ENCODE measurements at regions of chr2 and their contacts with region 1.

Region 1: GRCh38 chr2:68925295-68925896 is 27.3 kb downstream of the GKN2 start:
- DNase-seq: peak; percentile 61 to 77 (median 71)
- H3K4me3 ChIP-seq: no peak overlapping the region
- H3K27ac ChIP-seq: no peak overlapping the region
- H3K4me1 ChIP-seq: peaks cover 0 to 4% (median 2%) of the 10 kb centered on the region in 4 experiments
- H3K27me3 ChIP-seq: no peaks in the 10 kb centered on the region

Region 2: GRCh38 chr2:68487773-68488355 is 437.5 kb before region 1 on chr2:
- CTCF ChIA-PET with region 1: interaction called, 26 read pairs
- POLR2A ChIA-PET with region 1: no interaction called
- DNase-seq: peak; percentile 32 to 58 (median 52)
- H3K4me3 ChIP-seq: no peak overlapping the region
- H3K27ac ChIP-seq: no peak overlapping the region
- H3K4me1 ChIP-seq: peaks cover 0 to 7% (median 2%) of the 10 kb centered on the region in 4 experiments
- H3K27me3 ChIP-seq: no peaks in the 10 kb centered on the region

Region 3: DNA sequence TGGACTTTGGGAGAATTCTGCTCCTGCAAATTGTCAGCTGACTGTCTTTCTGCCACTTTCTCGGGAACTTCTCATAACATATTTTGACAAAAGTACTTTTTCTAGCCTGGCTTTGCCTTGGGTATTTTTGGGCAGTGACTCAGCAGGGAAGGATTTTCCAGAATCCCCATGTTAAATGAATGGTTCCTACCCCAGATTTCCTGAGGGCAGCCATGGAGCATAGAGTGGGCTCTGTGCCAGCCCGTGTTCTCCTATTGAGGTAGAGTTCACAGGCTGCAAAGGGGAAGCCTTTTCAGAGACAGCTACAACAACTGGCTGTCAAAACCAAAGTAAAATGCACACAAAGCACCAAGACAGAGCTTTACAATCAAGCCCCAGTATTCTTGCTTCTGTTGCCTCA is 114.0 kb before region 1 on chr2:
- CTCF ChIA-PET with region 1: interaction called, 12 read pairs
- POLR2A ChIA-PET with region 1: no interaction called
- DNase-seq: peak in 2 of 3 donors; percentile 29 to 36
- H3K4me3 ChIP-seq: no peak overlapping the region
- H3K27ac ChIP-seq: peak overlapping the region in 1 of 2 experiments; percentile 29
- H3K4me1 ChIP-seq: peaks cover 8 to 55% (median 36%) of the 10 kb centered on the region in 4 experiments
- H3K27me3 ChIP-seq: no peaks in the 10 kb centered on the region

Region 4: DNA sequence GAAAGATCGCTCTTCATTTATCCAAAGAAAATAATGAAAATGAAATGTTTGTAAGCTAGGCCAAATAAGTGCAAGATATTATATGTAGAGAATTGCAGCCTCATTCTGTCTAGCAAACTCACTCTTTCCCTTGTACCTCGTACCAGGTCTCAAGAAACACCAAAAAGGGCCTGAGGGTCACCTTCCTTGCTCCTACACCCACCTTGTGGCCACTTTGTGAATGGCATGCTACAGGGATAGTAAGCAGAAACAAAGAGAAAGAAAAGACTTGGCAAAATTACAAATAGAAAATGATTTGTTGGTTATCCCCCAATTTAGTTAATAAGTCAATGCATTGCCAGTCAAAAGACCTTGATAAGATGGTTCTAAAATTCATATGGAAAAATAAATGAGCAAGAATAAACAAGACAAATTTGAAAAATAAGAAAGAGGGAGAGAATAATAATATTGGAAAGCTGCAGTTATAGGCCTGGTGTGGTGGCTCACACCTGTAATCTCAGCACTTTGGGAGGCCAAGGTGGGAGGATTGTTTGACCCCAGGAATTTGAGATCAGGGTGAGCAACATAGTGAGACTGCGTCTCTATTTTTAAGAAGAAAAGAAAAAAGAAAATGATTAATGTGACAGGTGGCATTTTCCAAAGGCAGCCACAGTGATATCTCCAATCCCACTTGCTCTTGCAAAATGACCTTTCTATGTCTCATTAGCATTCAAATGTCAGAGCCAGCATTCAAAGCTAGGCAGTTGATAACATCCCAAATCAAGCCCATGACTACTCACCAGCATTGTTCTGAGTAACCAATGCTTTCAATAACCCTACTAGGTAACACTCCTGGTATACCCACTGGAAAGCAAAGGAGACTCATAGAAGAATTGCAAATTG is 15.4 kb before region 1 on chr2:
- CTCF ChIA-PET with region 1: interaction called, 13 read pairs
- POLR2A ChIA-PET with region 1: no interaction called
- DNase-seq: peak; percentile 85 to 91 (median 88)
- H3K4me3 ChIP-seq: no peak overlapping the region
- H3K27ac ChIP-seq: no peak overlapping the region
- H3K4me1 ChIP-seq: peaks cover 11 to 74% (median 65%) of the 10 kb centered on the region in 4 experiments
- H3K27me3 ChIP-seq: no peaks in the 10 kb centered on the region

Region 5: DNA sequence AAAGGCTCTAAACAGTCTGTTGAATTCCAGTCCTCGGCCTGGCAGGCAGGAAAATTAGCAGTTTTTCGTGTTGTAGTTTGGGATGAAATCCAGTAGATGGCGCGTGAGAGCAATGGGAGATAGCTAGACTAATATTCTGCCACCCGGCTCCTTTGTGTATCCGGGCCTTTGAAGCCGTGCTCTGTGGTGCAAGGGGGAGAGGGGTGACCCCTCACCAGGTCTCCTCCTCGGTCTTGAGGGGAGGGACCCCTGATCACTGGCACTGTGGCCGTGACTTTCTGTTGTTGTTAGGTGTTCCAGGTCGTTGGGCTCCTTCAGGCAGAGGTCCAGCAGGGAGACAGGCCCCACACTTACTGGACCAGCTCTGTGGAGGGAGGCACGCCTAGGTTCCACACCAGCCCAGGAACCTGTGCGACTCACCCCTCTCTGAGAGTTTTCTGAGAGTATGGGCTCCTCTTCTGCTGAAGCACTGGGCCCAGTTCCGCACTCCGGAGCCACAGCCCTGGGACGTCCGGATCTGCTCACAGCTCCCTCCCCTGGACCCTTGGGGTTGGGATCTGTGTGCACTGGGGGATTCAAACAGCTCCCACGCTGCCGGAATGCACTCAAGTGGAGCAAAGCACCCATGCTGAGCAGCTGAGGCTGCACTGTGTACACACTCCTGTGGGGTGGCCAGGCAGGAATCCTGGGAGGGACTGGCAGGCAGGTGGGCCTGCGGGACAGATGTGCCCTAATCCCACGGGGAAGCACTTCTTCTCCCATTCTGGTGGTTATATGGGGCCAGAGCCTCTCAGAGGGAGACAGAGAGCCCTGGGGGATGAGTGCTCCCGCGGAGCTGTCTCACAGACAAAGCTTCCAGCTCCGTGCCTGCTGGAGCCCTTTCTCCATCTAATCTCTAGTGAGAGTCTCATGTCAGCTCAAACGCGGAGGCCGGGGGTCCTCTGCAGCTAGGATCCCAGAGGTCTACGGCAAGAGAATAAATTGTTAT is 18.5 kb after region 1 on chr2:
- CTCF ChIA-PET with region 1: interaction called, 19 read pairs
- POLR2A ChIA-PET with region 1: no interaction called
- DNase-seq: peak; percentile 42 to 73 (median 63)
- H3K4me3 ChIP-seq: no peak overlapping the region
- H3K27ac ChIP-seq: no peak overlapping the region
- H3K4me1 ChIP-seq: peaks cover 0 to 2% (median 0%) of the 10 kb centered on the region in 4 experiments
- H3K27me3 ChIP-seq: no peaks in the 10 kb centered on the region